Caco-2 (cell line): ENCODE measurements at regions of chr3 and their contacts with region 1.

Region 1: GRCh38 chr3:9302425-9303181 is 53.2 kb upstream of the SRGAP3 start:
- DNase-seq: peak; percentile 79 to 85
- H3K4me3 ChIP-seq: no peak overlapping the region
- H3K4me3 Mint-ChIP-seq: no peak overlapping the region
- H3K27ac Mint-ChIP-seq: no peak overlapping the region
- H3K4me1 ChIP-seq: no peaks in the 10 kb centered on the region
- H3K4me1 Mint-ChIP-seq: no peaks in the 10 kb centered on the region
- H3K27me3 ChIP-seq: no peaks in the 10 kb centered on the region
- H3K27me3 Mint-ChIP-seq: peaks cover 3% of the 10 kb centered on the region
- CTCF ChIP-seq: peak; percentile 75 to 85

Region 2: DNA sequence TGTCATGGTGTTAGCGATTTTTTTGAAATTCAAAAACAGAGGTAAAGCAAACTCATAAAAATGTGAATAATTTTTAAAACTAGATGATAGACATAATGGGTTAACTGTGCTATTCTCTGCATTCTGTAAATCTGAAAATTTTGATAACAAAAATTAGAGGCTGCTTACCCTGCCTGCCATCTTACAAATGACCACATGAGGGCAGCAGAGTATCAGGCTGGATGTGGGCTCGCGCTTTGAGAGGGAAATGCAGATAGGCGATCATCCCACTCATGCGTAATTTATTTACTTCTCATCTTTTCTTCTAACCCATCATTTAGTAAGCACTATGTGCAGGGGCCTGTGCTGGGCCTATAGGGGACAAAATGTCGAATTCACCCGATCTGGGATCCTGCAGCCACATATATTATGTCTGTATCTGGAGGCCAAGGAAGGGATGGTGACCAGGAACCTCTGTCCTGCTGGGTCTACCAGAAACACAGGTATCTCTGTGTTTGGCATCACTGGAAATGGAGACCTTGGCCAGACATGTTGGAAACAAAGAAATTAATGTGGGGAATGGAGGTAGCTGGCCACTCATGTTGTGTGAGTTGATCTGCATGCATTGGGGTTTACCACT is 331.5 kb before region 1 on chr3:
- CTCF ChIA-PET with region 1: interaction called, 4 read pairs
- POLR2A ChIA-PET with region 1: no interaction called
- intact Hi-C with region 1: loop called (anchors 1 kb)
- DNase-seq: peak in 1 of 2 experiments; percentile 72
- H3K4me3 ChIP-seq: no peak overlapping the region
- H3K4me3 Mint-ChIP-seq: no peak overlapping the region
- H3K27ac Mint-ChIP-seq: no peak overlapping the region
- H3K4me1 ChIP-seq: no peaks in the 10 kb centered on the region
- H3K4me1 Mint-ChIP-seq: no peaks in the 10 kb centered on the region
- H3K27me3 ChIP-seq: no peaks in the 10 kb centered on the region
- H3K27me3 Mint-ChIP-seq: no peaks in the 10 kb centered on the region
- CTCF ChIP-seq: peak; percentile 92 to 94

Region 3: GRCh38 chr3:9033867-9034266 is 268.7 kb before region 1 on chr3:
- CTCF ChIA-PET with region 1: interaction called, 3 read pairs
- POLR2A ChIA-PET with region 1: no interaction called
- intact Hi-C with region 1: loop called (anchors 1 kb)
- DNase-seq: peak in 1 of 2 experiments; percentile 16
- H3K4me3 ChIP-seq: no peak overlapping the region
- H3K4me3 Mint-ChIP-seq: no peak overlapping the region
- H3K27ac Mint-ChIP-seq: no peak overlapping the region
- H3K4me1 ChIP-seq: no peaks in the 10 kb centered on the region
- H3K4me1 Mint-ChIP-seq: no peaks in the 10 kb centered on the region
- H3K27me3 ChIP-seq: no peaks in the 10 kb centered on the region
- H3K27me3 Mint-ChIP-seq: peaks cover 9% of the 10 kb centered on the region
- CTCF ChIP-seq: peak in 1 of 2 experiments; percentile 27

Region 4: DNA sequence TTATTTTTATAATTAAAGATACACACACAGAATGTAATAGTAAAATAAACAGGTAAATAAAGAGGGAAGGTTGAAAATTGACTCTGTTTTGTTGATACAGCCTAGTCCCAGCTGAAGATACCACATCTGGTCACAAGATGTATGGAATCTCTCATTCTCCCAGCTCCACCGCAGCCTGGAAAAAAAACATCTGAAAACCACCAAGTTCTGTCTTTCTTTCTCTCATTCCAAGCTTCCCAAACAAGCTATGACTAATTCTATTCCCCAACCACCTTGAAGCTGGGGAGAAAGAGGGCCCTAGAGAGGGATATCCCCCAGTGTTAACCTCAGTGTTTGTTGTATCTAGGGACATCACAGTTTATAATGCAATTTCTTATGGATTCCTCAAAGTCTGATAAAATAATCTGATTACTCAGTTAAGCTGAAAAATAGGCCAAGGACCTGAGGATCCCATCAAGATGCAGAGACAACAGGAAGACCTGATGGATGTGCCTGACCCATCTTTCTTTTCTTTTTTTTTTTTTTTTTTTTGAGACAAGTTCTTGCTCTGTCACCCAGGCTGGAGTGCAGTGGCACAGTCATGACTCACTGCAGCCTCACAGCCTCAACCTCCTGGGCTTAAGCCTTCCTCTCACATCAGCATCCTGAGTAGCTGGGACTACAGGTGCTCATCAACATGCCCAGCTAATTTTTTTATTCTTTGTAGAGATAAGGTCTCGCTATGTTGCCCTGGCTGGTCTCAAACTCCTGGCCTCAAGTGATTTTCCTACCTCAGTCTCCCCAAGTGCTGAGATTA is 91.2 kb before region 1 on chr3:
- CTCF ChIA-PET with region 1: no interaction called
- POLR2A ChIA-PET with region 1: no interaction called
- intact Hi-C with region 1: no loop called
- DNase-seq: no peak
- H3K4me3 ChIP-seq: no peak overlapping the region
- H3K4me3 Mint-ChIP-seq: no peak overlapping the region
- H3K27ac Mint-ChIP-seq: no peak overlapping the region
- H3K4me1 ChIP-seq: no peaks in the 10 kb centered on the region
- H3K4me1 Mint-ChIP-seq: no peaks in the 10 kb centered on the region
- H3K27me3 ChIP-seq: no peaks in the 10 kb centered on the region
- H3K27me3 Mint-ChIP-seq: peaks cover 9% of the 10 kb centered on the region
- CTCF ChIP-seq: no peak

Region 5: GRCh38 chr3:9224490-9224889 is 78.1 kb before region 1 on chr3:
- CTCF ChIA-PET with region 1: no interaction called
- POLR2A ChIA-PET with region 1: no interaction called
- intact Hi-C with region 1: loop called (anchors 1 kb)
- DNase-seq: peak in 1 of 2 experiments; percentile 7
- H3K4me3 ChIP-seq: no peak overlapping the region
- H3K4me3 Mint-ChIP-seq: no peak overlapping the region
- H3K27ac Mint-ChIP-seq: no peak overlapping the region
- H3K4me1 ChIP-seq: no peaks in the 10 kb centered on the region
- H3K4me1 Mint-ChIP-seq: peaks cover 6% of the 10 kb centered on the region
- H3K27me3 ChIP-seq: no peaks in the 10 kb centered on the region
- H3K27me3 Mint-ChIP-seq: peaks cover 7% of the 10 kb centered on the region
- CTCF ChIP-seq: no peak